OCI-LY7 (cell line): ENCODE measurements at regions of chr11 and their contacts with region 1.

Region 1: DNA sequence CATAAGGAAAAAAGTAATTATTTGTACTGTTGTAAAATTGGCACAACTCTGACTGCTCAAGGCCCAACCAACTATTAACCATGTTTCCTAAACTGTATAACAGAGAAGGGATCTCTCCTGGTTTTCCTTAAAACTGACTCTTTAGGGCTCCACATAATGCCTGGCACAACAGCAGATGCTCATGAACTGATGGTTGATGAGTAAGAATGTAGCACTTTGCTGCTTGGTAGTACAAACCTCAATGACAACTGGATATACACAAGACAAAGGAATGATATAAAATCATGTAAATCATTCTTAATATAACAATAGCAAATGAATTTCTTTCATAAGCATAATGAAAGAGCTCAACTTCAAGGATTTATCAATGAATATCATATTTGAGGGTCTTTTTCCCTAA is 11.7 kb downstream of the MSANTD2 start:
- DNase-seq: no peak
- H3K4me3 ChIP-seq: no peak overlapping the region
- H3K27ac ChIP-seq: no peak overlapping the region
- H3K4me1 ChIP-seq: peaks cover 8% of the 10 kb centered on the region
- CTCF ChIP-seq: no peak

Region 2: DNA sequence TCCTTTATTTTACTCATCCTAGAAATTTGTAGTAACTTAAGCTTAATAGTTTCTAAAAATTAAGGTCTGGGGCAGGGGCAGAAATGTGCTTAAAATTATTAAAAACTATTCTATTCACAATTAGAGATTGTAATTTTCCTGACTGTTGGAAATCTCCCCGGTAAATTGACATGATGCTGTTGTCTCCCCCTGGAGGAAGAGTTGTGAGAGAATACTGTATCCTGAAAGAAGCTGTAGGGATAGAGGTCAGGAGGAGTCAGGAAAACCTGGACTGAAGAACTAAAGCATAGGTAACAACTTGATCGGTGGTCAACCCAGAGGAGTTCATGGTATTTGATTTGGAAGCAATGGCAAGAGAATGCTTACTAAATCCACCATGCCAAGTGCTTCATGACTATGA is 10.2 kb before region 1 on chr11:
- CTCF ChIA-PET with region 1: no interaction called
- POLR2A ChIA-PET with region 1: interaction called, 10 read pairs
- intact Hi-C with region 1: no loop called
- DNase-seq: no peak
- H3K4me3 ChIP-seq: no peak overlapping the region
- H3K27ac ChIP-seq: no peak overlapping the region
- H3K4me1 ChIP-seq: peaks cover 7% of the 10 kb centered on the region
- CTCF ChIP-seq: peak; percentile 42

Region 3: GRCh38 chr11:124804884-124805283 is 16.4 kb after region 1 on chr11:
- CTCF ChIA-PET with region 1: no interaction called
- POLR2A ChIA-PET with region 1: no interaction called
- intact Hi-C with region 1: no loop called
- DNase-seq: no peak
- H3K4me3 ChIP-seq: no peak overlapping the region
- H3K27ac ChIP-seq: no peak overlapping the region
- H3K4me1 ChIP-seq: peaks cover 11% of the 10 kb centered on the region
- CTCF ChIP-seq: no peak

Region 4: DNA sequence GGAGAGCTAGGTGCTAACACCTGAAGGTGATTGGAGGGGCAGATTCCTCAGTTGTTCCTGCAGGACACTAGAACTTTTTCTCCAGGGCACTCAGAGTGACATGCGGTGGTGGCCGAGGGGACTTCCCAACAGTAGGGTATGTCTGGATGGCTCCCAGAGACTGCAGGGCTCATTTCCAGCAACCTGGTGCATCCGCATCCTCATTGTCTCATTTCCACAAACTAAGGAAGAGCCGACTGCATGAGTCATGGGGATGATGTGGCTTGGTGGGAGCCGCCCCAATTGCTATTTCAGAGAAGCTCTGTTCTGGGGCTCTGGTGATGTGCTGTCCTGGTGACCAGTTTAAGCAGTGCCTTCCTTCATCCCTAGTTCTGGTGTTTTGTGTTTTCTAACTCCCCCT is 111.9 kb after region 1 on chr11:
- CTCF ChIA-PET with region 1: no interaction called
- POLR2A ChIA-PET with region 1: no interaction called
- intact Hi-C with region 1: no loop called
- DNase-seq: no peak
- H3K4me3 ChIP-seq: no peak overlapping the region
- H3K27ac ChIP-seq: no peak overlapping the region
- H3K4me1 ChIP-seq: no peaks in the 10 kb centered on the region
- CTCF ChIP-seq: no peak